GM12878 (cell line): ENCODE measurements at regions of chr22 and their contacts with region 1.

Region 1: DNA sequence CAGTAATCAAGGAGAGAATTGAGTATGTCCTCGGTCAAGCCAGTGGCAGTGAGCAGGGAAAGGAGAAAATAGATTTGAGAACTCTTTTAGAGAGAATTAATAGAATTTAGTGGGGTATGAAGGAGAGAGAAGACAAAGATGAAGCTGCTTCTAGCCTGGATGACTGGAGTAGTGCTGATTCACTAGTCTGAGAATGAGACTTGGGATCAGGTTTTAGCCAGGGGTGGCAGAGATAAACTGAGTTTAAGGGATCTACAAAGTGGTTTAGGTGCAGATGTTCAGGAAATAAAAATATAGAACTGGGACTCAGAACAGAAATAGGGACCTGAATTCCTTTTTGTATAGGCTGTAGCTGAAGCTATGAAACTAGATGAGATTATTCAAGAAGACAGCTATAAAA is 17.6 kb downstream of the HORMAD2 start:
- DNase-seq: no peak
- ATAC-seq: no peak
- H3K4me3 ChIP-seq: no peak overlapping the region
- H3K27ac ChIP-seq: no peak overlapping the region
- H3K4me1 ChIP-seq: no peaks in the 10 kb centered on the region
- H3K27me3 ChIP-seq: no peaks in the 10 kb centered on the region
- CTCF ChIP-seq: no peak
- EP300 ChIP-seq: no peak
- POLR2A ChIP-seq: no peak
- RAD21 ChIP-seq: no peak

Region 2: GRCh38 chr22:29701155-29701999 is 396.5 kb before region 1 on chr22:
- CTCF ChIA-PET with region 1: no interaction called
- POLR2A ChIA-PET with region 1: interaction called, 10 read pairs
- RAD21 ChIA-PET with region 1: no interaction called
- SMC1A ChIA-PET with region 1: no interaction called
- in situ Hi-C with region 1: no loop called
- intact Hi-C with region 1: no loop called
- DNase-seq: no peak
- ATAC-seq: peak; percentile 66
- H3K4me3 ChIP-seq: no peak overlapping the region
- H3K27ac ChIP-seq: no peak overlapping the region
- H3K4me1 ChIP-seq: 0 out of 2 replicates have a peak, but pooled peaks cover 3% of the 10 kb centered on the region
- H3K27me3 ChIP-seq: no peaks in the 10 kb centered on the region
- CTCF ChIP-seq: peak; percentile 16 to 28 (median 21); a peak in 3 of 6 replicates
- EP300 ChIP-seq: no peak
- POLR2A ChIP-seq: no peak
- RAD21 ChIP-seq: 0 out of 2 replicates have a peak, but pooled peaks have one; percentile 12